Right ventricle myocardium inferior (tissue), 1 donor: ENCODE measurements at regions of chr9 and their contacts with region 1.

Region 1: GRCh38 chr9:88753691-88754367 is 218.9 kb downstream of the NXNL2 start:
- DNase-seq: no peak
- ATAC-seq: peak; percentile 59

Region 2: DNA sequence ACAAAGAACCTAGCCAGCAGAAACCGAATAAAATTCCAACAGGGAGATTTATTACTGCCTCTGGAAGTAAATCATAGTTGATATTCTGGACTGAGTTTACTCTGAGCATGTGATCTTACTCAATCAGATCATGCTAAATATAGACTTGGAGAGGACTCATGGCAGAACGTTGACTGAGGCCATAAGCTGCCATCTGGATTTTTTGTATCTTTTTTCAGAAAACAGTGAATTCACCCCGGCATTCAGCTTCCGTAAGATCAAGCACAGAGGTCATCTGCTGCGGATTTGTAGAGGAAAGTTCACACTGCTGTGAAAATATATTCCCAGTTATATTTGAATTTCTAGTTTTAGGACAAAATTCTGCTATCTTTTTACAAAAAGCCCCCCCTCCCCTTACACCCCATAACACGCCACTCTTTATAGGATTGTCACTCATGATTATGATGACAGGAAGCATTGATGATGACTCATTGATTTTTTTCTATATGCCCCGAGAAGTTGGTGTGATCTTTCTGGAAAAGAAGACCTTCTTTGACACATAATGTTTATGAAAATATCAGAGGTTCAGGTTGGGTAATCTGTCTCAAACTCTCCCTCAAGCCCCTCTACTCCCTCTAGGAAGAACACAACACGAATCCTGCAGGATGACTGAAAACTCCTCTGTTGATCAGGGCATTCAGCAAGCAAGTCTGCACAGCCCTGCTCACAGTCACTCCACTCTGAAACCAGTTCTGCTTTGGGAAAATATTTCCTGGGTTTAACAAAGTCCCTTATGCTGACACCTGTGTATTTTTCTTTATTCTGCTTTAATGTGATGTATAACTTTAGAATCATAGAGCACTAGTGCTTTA is 148.1 kb before region 1 on chr9:
- intact Hi-C with region 1: loop called (anchors 10 kb)
- DNase-seq: no peak
- ATAC-seq: peak; percentile 81

Region 3: GRCh38 chr9:88818495-88819201 is 64.8 kb after region 1 on chr9:
- intact Hi-C with region 1: no loop called
- DNase-seq: no peak
- ATAC-seq: no peak

Region 4: GRCh38 chr9:89077519-89077918 is 323.7 kb after region 1 on chr9:
- intact Hi-C with region 1: no loop called
- DNase-seq: no peak
- ATAC-seq: no peak